Activated naive CD4-positive, alpha-beta T cell treated with anti-CD3 and anti-CD28 coated beads, Interleukin-2, amount 10 ng/mL, durations not matched to agents 7 days and 5 days (primary cell): ENCODE measurements at regions of chr11 and their contacts with region 1.

Region 1: GRCh38 chr11:47932544-47932943 is 47.8 kb upstream of the PTPRJ start:
- DNase-seq: no peak
- H3K4me3 Mint-ChIP-seq: no peak overlapping the region
- H3K27ac Mint-ChIP-seq: no peak overlapping the region
- H3K4me1 Mint-ChIP-seq: peaks cover 50% of the 10 kb centered on the region
- H3K27me3 Mint-ChIP-seq: no peaks in the 10 kb centered on the region

Region 2: DNA sequence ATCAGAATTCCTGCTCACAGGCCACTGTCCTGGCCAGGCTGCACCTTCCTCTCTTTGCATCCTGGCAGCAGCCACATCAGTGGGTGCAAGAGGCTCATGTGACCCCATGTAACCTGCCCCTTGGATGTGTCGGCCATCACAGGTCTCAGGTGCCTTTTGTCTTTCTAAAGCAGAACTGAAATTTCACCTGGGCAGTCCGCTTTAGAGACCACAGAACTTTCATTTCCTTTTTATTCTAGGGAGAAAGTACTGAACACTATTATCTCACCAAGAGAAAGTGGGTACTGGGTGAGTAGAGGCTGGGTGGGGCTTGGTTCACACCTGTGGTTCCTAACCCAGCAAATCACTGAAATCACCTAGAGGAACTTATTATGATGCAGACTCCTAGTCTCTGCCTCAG is 32.7 kb before region 1 on chr11:
- CTCF ChIA-PET with region 1: no interaction called
- DNase-seq: peak; percentile 46
- H3K4me3 Mint-ChIP-seq: no peak overlapping the region
- H3K27ac Mint-ChIP-seq: no peak overlapping the region
- H3K4me1 Mint-ChIP-seq: peaks cover 24% of the 10 kb centered on the region
- H3K27me3 Mint-ChIP-seq: peaks cover 8% of the 10 kb centered on the region

Region 3: GRCh38 chr11:47918882-47919495 is 13.6 kb before region 1 on chr11:
- CTCF ChIA-PET with region 1: interaction called, 14 read pairs
- DNase-seq: no peak
- H3K4me3 Mint-ChIP-seq: no peak overlapping the region
- H3K27ac Mint-ChIP-seq: no peak overlapping the region
- H3K4me1 Mint-ChIP-seq: peaks cover 76% of the 10 kb centered on the region
- H3K27me3 Mint-ChIP-seq: no peaks in the 10 kb centered on the region

Region 4: DNA sequence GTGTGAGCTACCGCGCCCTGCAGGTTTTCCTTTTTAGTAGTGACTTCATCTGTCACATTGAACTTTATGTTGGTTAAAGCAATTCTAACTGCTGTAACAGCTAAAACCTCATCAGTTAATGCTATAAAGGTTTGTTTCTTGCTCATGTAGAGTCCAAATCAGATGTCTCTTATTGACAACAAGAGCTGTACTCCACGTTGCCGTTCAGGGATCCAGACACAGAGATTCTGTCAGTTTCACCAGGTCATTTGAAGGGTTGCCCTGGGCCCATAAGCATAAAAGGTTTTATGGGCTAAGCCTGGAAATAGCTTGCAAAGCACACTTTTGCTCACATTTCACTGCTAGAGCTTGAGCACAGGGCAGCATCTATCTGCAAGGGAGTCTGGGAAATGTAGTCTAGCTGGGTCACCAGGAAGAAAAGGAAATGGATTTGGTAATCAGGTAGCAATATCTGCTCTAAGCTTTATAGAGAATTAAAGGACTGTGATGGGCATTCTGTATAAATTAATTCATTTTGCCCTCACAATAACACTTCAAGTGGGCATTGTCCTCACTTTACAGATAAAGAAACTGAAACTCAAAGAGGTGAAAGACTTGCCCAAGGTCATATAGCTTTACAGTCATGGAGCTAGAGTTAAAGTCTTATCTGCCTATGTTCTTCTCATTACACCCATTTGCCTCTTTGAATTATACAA is 22.7 kb after region 1 on chr11:
- CTCF ChIA-PET with region 1: interaction called, 11 read pairs
- DNase-seq: no peak
- H3K4me3 Mint-ChIP-seq: no peak overlapping the region
- H3K27ac Mint-ChIP-seq: no peak overlapping the region
- H3K4me1 Mint-ChIP-seq: peaks cover 29% of the 10 kb centered on the region
- H3K27me3 Mint-ChIP-seq: no peaks in the 10 kb centered on the region

Region 5: DNA sequence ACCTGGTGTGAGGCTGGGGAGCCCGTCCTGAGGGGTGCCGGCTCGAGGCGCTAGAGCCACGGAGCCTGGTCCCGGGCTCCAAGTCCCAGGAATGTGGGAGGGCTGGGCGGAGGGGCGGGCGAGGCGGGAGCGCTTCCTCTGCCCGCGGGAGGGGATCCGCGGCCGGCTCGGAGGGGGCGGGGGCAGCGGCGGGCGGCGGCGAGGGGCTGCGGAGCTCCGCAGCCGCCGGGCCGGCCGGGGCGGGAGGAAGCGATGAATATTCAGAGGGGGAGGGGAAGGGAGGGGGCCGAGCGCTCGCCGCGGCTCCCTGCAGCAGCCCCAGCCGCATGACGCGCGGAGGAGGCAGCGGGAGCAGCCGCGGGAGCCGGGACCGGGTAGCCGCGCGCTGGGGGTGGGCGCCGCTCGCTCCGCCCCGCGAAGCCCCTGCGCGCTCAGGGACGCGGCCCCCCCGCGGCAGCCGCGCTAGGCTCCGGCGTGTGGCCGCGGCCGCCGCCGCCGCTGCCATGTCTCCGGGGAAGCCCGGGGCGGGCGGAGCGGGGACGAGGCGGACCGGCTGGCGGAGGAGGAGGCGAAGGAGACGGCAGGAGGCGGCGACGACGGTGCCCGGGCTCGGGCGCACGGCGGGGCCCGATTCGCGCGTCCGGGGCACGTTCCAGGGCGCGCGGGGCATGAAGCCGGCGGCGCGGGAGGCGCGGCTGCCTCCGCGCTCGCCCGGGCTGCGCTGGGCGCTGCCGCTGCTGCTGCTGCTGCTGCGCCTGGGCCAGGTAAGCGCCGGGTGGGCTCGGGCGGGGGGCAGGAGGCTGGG is 47.9 kb after region 1 on chr11 and contains the start of gene PTPRJ:
- CTCF ChIA-PET with region 1: interaction called, 10 read pairs
- DNase-seq: peak; percentile 72
- H3K4me3 Mint-ChIP-seq: peak within 1 kb of the TSS; percentile 98
- H3K27ac Mint-ChIP-seq: peak within 1 kb of the TSS; percentile 89
- H3K4me1 Mint-ChIP-seq: peaks cover 37% of the 10 kb centered on the region
- H3K27me3 Mint-ChIP-seq: peaks cover 37% of the 10 kb centered on the region

Region 6: DNA sequence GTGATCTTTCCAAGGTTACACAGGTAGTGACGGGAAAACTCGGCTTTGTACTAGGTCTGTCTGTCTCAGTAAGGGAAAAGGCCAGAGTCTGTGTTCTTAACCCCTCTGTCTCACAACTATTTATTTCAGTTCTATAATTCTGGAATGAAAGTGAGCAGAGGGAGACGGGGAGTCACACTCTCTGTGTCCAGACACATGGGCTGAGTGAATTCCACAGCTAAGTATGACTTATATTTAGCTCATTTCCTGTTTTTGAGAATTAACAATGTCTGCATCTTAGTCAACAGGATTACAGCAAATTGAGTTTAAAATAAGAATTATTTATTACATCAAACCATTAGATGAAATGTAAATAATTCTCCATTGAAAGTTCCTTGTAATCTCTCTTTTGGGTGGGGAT is 221.6 kb after region 1 on chr11:
- CTCF ChIA-PET with region 1: no interaction called
- DNase-seq: no peak
- H3K4me3 Mint-ChIP-seq: no peak overlapping the region
- H3K27ac Mint-ChIP-seq: no peak overlapping the region
- H3K4me1 Mint-ChIP-seq: peaks cover 5% of the 10 kb centered on the region
- H3K27me3 Mint-ChIP-seq: no peaks in the 10 kb centered on the region